Calu3 (cell line): ENCODE measurements at regions of chr1 and their contacts with region 1.

Region 1: DNA sequence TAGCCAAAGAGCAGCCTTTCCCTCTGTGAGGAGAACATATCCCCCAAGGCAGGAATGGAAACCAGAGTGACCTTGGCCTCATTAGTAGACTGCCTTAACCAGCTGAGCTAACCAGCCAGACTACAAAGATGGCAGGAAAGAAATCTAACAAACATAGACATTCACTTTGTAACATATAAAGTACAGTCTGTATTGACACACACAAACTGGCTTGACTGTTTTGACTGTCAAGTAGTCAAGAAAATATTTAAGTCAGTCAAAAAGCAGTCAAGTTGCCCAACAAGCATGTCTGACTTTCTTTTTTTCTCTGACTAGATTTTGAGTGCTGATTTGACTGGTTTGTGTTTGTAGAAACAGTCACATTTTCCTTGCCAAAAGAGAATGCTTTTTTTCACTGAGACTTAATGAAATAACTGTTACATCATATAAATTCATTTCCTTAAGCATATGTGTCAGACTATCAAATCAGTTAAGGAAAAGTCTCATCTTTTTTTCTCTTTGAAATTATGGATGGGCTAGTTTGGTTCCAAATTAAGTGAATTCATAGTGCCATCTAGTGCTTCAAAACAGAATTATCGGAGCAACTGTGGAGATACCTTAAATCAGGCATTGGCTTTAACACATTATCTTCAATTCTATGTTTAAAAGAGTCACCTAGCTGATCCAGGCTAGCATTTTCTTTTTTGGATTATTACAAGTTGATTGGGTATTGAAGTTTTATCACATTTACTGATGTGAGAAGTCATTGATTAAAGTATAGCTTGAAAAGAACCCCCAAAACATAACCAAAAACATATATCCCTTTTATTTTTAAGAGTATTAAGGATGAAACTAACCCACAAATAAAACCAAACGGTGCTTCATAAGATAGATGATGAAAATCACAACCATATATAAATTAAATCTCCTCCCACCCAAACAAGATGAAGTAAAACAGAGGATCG is 75.0 kb downstream of the ATP6V1G3 start:
- DNase-seq: no peak
- H3K4me3 Mint-ChIP-seq: no peak overlapping the region
- H3K27ac Mint-ChIP-seq: peak overlapping the region; percentile 35
- H3K4me1 Mint-ChIP-seq: peaks cover 17% of the 10 kb centered on the region
- H3K27me3 Mint-ChIP-seq: no peaks in the 10 kb centered on the region
- CTCF ChIP-seq: peak; percentile 61

Region 2: DNA sequence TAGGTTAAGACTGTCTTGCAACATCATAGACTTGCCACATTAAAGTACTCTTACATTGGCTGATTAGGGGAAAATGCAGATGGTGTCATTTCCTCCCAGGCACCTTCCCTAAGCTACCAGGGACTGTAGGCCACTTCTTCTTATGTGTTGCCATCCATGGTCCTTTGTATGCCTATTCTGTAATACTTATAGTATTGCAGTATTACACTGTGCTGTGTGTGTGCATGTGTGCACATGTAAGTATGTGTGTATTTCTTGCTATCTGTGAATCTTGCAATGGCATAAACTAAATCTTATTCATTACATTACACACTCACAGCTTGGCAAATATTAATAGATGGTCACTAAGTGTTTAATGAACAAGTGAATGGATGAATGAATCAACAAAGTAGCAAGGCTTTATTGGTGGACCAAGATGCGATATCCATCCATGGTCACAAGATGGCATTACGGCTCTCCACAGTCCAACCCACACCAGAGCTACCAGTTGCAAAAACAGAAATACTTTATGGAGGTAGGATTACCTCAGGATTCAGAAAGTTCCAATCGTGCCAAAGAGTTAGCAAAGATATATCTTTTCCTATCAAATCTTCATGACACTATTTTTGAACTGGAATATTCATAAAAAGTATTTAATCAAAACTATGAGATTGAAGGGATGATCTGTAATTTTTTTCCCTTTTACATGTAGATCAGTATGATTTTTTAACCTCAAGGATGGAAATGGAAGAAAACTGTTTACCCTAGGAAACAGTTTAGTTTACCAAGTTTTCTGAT is 850.4 kb before region 1 on chr1:
- CTCF ChIA-PET with region 1: no interaction called
- intact Hi-C with region 1: loop called (anchors 5 kb)
- DNase-seq: peak; percentile 48
- H3K4me3 Mint-ChIP-seq: no peak overlapping the region
- H3K27ac Mint-ChIP-seq: no peak overlapping the region
- H3K4me1 Mint-ChIP-seq: no peaks in the 10 kb centered on the region
- H3K27me3 Mint-ChIP-seq: no peaks in the 10 kb centered on the region
- CTCF ChIP-seq: peak; percentile 46

Region 3: GRCh38 chr1:198072177-198072576 is 393.3 kb before region 1 on chr1:
- CTCF ChIA-PET with region 1: no interaction called
- intact Hi-C with region 1: loop called (anchors 5 kb)
- DNase-seq: no peak
- H3K4me3 Mint-ChIP-seq: no peak overlapping the region
- H3K27ac Mint-ChIP-seq: no peak overlapping the region
- H3K4me1 Mint-ChIP-seq: no peaks in the 10 kb centered on the region
- H3K27me3 Mint-ChIP-seq: no peaks in the 10 kb centered on the region
- CTCF ChIP-seq: no peak

Region 4: GRCh38 chr1:198275597-198275996 is 189.9 kb before region 1 on chr1:
- CTCF ChIA-PET with region 1: no interaction called
- intact Hi-C with region 1: loop called (anchors 5 kb)
- DNase-seq: no peak
- H3K4me3 Mint-ChIP-seq: no peak overlapping the region
- H3K27ac Mint-ChIP-seq: no peak overlapping the region
- H3K4me1 Mint-ChIP-seq: peaks cover 27% of the 10 kb centered on the region
- H3K27me3 Mint-ChIP-seq: no peaks in the 10 kb centered on the region
- CTCF ChIP-seq: no peak

Region 5: DNA sequence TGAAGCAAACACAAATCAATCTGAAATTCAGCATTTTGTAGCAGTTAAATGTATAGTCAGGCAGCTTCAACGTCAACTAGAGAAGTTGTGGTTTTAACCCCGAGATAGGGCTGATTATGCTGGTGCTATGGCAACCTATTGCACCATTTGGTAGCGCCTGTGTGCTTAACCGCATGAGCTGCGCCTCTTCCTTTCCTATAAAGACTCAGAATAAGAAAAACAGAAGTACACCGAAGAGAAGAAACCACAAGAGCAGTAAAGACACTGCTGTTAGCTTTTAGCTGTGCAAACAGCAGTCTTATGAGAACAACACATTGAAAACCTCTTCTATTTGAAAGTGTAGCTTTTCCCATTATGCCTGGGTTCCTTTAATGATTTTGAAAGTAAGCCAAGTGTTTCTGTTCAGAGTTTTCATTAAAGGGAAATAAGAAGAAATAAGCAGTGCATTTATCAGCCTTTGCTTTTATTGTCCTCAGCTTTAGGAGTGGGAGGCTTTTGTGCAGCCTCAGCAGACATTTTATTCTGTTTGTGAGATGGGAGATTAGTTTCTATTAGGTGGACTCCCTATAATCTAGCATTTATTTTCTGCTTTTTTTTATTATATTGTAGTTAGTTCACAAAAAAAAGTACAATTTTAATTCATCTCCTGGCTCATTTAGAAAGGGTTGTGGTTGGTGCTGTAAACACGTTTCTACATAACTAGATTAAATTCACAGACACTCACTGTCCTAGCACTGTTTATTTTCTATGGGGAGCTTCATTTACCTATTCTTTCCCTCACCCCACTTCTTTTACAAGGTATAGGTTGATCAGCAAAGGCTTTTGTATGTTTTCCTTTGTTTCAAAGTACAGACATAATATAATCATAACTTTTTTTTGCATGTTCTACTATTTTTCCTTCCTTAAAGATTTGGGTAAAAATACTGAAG is 216.6 kb after region 1 on chr1:
- CTCF ChIA-PET with region 1: interaction called, 5 read pairs
- intact Hi-C with region 1: loop called (anchors 2 kb)
- DNase-seq: peak; percentile 66
- H3K4me3 Mint-ChIP-seq: peak overlapping the region; percentile 53
- H3K27ac Mint-ChIP-seq: peak overlapping the region; percentile 81
- H3K4me1 Mint-ChIP-seq: peaks cover 20% of the 10 kb centered on the region
- H3K27me3 Mint-ChIP-seq: no peaks in the 10 kb centered on the region
- CTCF ChIP-seq: no peak